CD4-positive, alpha-beta T cell (primary cell): ENCODE measurements at regions of chr15 and their contacts with region 1.

Region 1: GRCh38 chr15:72473614-72474465 is at the start of gene ARIH1:
- DNase-seq: peak; percentile 91 to 99 (median 96)
- ATAC-seq: peak; percentile 68
- H3K4me3 ChIP-seq: peak within 1 kb of the TSS; percentile 87
- H3K4me3 Mint-ChIP-seq: peak within 1 kb of the TSS; percentile 89
- H3K27ac ChIP-seq: peak within 1 kb of the TSS; percentile 100
- H3K27ac Mint-ChIP-seq: peak within 1 kb of the TSS; percentile 99
- H3K4me1 ChIP-seq: peaks cover 36% of the 10 kb centered on the region
- H3K4me1 Mint-ChIP-seq: peaks cover 62% of the 10 kb centered on the region
- H3K27me3 ChIP-seq: no peaks in the 10 kb centered on the region
- H3K27me3 Mint-ChIP-seq: no peaks in the 10 kb centered on the region
- CTCF ChIP-seq: peak; percentile 23
- total RNA-seq, gene ARIH1: 281 to 283 TPM

Region 2: DNA sequence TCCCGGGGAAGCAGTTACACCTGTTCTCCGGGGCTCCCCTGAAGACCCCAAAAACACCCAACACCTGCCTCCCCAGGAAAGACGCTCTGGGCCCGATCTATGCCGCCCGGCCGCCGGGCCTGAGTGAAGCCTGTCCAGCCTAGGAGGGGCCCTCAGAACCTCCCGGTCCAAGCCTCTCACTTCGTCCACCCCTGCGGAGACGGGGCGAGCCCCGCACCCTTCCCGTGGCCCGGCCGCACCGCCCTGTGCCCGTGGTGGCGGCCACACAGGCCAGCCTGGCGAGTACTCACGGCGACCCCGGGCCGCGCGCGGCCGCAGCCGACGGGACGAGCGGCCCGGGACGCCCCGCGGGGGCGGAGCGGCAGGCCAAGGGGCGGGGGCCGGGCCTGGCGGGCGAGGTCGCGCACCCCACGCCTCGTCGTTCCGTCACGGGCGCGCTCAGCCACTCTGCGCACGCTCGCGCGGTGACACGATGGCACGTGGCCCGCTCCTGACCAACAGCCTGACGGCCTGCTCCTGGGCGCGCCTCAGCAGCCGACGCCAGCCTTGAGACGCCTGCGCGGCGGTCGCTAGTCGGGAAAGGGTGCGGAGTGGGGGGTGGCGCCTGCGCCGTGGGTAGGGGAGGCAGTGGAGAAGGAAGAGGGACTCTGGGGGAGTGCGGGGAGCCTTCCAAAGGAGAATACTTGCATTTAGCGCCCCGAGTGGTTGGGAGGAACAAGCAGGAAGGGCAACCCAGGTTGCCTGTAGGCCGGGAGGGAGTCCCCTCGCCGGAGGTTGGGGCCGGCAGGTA is 201.4 kb before region 1 on chr15 and contains the start of gene PARP6:
- CTCF ChIA-PET with region 1: no interaction called
- POLR2A ChIA-PET with region 1: no interaction called
- intact Hi-C with region 1: loop called in 1 of 2 experiments (anchors 5 kb)
- DNase-seq: peak; percentile 95 to 100 (median 98)
- ATAC-seq: peak; percentile 94
- H3K4me3 ChIP-seq: peak within 1 kb of the TSS; percentile 89
- H3K4me3 Mint-ChIP-seq: peak within 1 kb of the TSS; percentile 92
- H3K27ac ChIP-seq: peak within 1 kb of the TSS; percentile 76 to 79
- H3K27ac Mint-ChIP-seq: peak within 1 kb of the TSS; percentile 93
- H3K4me1 ChIP-seq: peaks cover 25% of the 10 kb centered on the region
- H3K4me1 Mint-ChIP-seq: peaks cover 47% of the 10 kb centered on the region
- H3K27me3 ChIP-seq: no peaks in the 10 kb centered on the region
- H3K27me3 Mint-ChIP-seq: no peaks in the 10 kb centered on the region
- CTCF ChIP-seq: peak; percentile 80
- total RNA-seq, gene PARP6: 128 to 133 TPM

Region 3: GRCh38 chr15:72375847-72376581 is 97.8 kb before region 1 on chr15 and contains the start of gene HEXA:
- CTCF ChIA-PET with region 1: interaction called, 11 read pairs
- POLR2A ChIA-PET with region 1: interaction called, 66 read pairs
- intact Hi-C with region 1: loop called (anchors 2 kb)
- DNase-seq: peak; percentile 89 to 97 (median 94)
- ATAC-seq: peak; percentile 68
- H3K4me3 ChIP-seq: peak within 1 kb of the TSS; percentile 87
- H3K4me3 Mint-ChIP-seq: peak within 1 kb of the TSS; percentile 94
- H3K27ac ChIP-seq: peak within 1 kb of the TSS; percentile 76 to 86
- H3K27ac Mint-ChIP-seq: peak within 1 kb of the TSS; percentile 96
- H3K4me1 ChIP-seq: peaks cover 28% of the 10 kb centered on the region
- H3K4me1 Mint-ChIP-seq: peaks cover 57% of the 10 kb centered on the region
- H3K27me3 ChIP-seq: no peaks in the 10 kb centered on the region
- H3K27me3 Mint-ChIP-seq: peaks cover 9% of the 10 kb centered on the region
- CTCF ChIP-seq: no peak
- total RNA-seq, gene HEXA: 66.3 to 66.9 TPM

Region 4: DNA sequence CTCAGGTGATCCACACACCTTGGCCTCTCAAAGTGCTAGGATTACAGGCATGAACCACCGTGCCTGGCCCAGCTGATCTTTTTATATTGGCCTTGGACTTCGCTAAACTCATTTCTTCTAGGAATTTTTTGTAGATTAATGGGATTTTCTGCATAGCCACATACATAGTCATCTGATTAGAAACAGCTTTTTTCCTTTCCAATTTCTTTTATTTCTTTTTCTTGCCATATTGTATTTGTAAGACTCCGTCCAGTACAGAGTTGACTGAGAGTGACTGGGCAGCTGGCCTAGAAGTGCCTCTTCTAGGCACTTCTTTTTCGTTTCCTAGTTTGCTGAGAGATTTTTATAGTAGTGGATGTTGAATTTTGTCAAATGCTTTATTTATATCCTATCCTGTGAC is 37.7 kb after region 1 on chr15:
- CTCF ChIA-PET with region 1: no interaction called
- POLR2A ChIA-PET with region 1: interaction called, 4 read pairs
- intact Hi-C with region 1: loop called in 1 of 2 experiments (anchors 5 kb)
- DNase-seq: no peak
- ATAC-seq: no peak
- H3K4me3 ChIP-seq: no peak overlapping the region
- H3K4me3 Mint-ChIP-seq: no peak overlapping the region
- H3K27ac ChIP-seq: no peak overlapping the region
- H3K27ac Mint-ChIP-seq: no peak overlapping the region
- H3K4me1 ChIP-seq: peaks cover 28% of the 10 kb centered on the region
- H3K4me1 Mint-ChIP-seq: peaks cover 81% of the 10 kb centered on the region
- H3K27me3 ChIP-seq: no peaks in the 10 kb centered on the region
- H3K27me3 Mint-ChIP-seq: no peaks in the 10 kb centered on the region
- CTCF ChIP-seq: no peak

Region 5: GRCh38 chr15:73051811-73052678 is 578.2 kb after region 1 on chr15 and contains the start of gene NEO1:
- CTCF ChIA-PET with region 1: no interaction called
- POLR2A ChIA-PET with region 1: no interaction called
- intact Hi-C with region 1: loop called in 1 of 2 experiments (anchors 10 kb)
- DNase-seq: peak; percentile 71 to 93 (median 80)
- ATAC-seq: peak; percentile 81
- H3K4me3 ChIP-seq: peak within 1 kb of the TSS; percentile 85
- H3K4me3 Mint-ChIP-seq: peak within 1 kb of the TSS; percentile 91
- H3K27ac ChIP-seq: peak within 1 kb of the TSS in 1 of 2 donors; percentile 50
- H3K27ac Mint-ChIP-seq: peak within 1 kb of the TSS; percentile 85
- H3K4me1 ChIP-seq: peaks cover 11% of the 10 kb centered on the region
- H3K4me1 Mint-ChIP-seq: peaks cover 14% of the 10 kb centered on the region
- H3K27me3 ChIP-seq: peaks cover 0 to 7% of the 10 kb centered on the region in 2 experiments
- H3K27me3 Mint-ChIP-seq: peaks cover 11% of the 10 kb centered on the region
- CTCF ChIP-seq: no peak
- total RNA-seq, gene NEO1: 6.0 to 8.0 TPM